A673 (cell line): ENCODE measurements at regions of chr12 and their contacts with region 1.

Region 1: GRCh38 chr12:110737532-110737931 is 5.2 kb downstream of the PPP1CC start:
- DNase-seq: no peak
- H3K4me3 ChIP-seq: no peak overlapping the region
- H3K27ac ChIP-seq: no peak overlapping the region
- H3K4me1 ChIP-seq: peaks cover 37% of the 10 kb centered on the region
- H3K27me3 ChIP-seq: no peaks in the 10 kb centered on the region
- CTCF ChIP-seq: no peak

Region 2: GRCh38 chr12:110424237-110424636 is 313.3 kb before region 1 on chr12:
- CTCF ChIA-PET with region 1: no interaction called
- POLR2A ChIA-PET with region 1: no interaction called
- intact Hi-C with region 1: no loop called
- DNase-seq: no peak
- H3K4me3 ChIP-seq: no peak overlapping the region
- H3K27ac ChIP-seq: no peak overlapping the region
- H3K4me1 ChIP-seq: no peaks in the 10 kb centered on the region
- H3K27me3 ChIP-seq: no peaks in the 10 kb centered on the region
- CTCF ChIP-seq: no peak

Region 3: GRCh38 chr12:110718222-110718908 is 19.2 kb before region 1 on chr12:
- CTCF ChIA-PET with region 1: no interaction called
- POLR2A ChIA-PET with region 1: no interaction called
- intact Hi-C with region 1: no loop called
- DNase-seq: no peak
- H3K4me3 ChIP-seq: no peak overlapping the region
- H3K27ac ChIP-seq: no peak overlapping the region
- H3K4me1 ChIP-seq: no peaks in the 10 kb centered on the region
- H3K27me3 ChIP-seq: no peaks in the 10 kb centered on the region
- CTCF ChIP-seq: no peak

Region 4: DNA sequence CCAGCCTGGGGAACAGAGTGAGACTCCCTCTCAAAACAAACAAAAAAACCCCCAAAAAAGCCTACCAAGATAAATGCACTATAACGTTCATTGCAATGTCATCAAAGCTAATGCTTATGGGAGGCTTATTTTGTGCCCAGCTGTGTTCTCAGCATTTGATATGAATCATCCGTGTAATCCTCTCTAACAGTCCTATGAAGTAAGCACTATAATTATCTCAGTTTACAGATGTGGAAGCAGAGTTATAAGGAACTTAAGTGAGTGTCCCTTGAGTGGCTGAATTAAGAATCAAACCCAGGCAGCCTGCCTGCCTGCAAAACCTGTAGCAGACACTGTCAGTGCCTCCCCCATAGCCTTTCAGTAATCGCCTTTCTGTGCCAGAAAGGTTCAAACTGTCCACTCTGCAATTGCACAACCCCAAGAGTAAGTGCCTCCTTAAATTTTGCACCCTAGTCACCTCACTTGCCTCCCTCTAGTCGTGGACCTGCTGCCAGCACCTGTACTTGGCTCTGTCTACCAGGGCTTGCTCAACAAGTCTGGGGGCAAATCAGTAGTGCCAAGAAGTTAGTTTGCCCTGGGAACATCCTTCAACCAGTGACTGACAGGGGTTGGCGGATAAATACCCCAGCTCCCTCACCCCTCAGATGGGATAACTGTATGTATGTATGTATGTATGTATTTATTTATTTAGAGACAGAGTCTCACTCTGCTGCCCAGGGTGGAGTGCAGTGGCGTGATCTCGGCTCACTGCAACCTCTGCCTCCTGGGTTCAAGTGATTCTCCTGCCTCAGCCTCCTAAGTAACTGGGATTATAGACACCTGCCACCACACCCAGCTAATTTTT is 29.0 kb after region 1 on chr12:
- CTCF ChIA-PET with region 1: no interaction called
- POLR2A ChIA-PET with region 1: interaction called, 29 read pairs
- intact Hi-C with region 1: no loop called
- DNase-seq: peak; percentile 76
- H3K4me3 ChIP-seq: no peak overlapping the region
- H3K27ac ChIP-seq: no peak overlapping the region
- H3K4me1 ChIP-seq: peaks cover 9% of the 10 kb centered on the region
- H3K27me3 ChIP-seq: no peaks in the 10 kb centered on the region
- CTCF ChIP-seq: no peak